Activated CD8-positive, alpha-beta T cell treated with anti-CD3 and anti-CD28 coated beads, Interleukin-2, amount 10 ng/mL, durations not matched to agents 7 days and 5 days (primary cell): ENCODE measurements at regions of chr14 and their contacts with region 1.

Region 1: DNA sequence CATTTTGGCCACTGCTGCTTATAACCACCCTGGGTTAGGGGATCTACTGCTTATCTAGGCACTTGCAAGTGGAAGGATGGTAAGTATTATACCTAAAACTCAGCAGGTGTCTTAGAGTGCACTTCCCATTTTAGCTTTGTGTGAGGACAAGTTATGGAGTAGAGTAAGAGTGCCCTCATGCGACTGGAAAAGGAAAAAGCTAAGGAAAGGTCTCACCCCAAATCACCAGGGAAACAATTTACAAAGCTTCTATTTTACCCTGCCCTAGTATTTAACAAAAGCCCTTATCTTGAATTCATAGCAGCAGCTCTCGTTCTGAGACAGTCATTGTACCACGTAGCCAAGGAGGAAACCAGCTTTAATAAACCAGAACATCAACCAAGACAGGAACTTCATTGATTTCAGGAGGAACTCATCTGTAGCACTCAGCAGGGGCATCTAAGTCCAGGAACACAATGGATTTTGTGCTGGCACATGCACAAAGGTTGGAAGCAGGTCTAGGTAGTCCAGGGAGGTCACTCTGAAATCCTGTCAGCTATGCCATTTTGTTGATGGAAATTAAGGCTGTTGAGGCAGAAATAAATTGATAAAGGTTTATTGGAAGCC is 2.9 kb downstream of the RDH12 start:
- DNase-seq: peak; percentile 53
- ATAC-seq: peak; percentile 82
- H3K4me3 Mint-ChIP-seq: no peak overlapping the region
- H3K27ac Mint-ChIP-seq: no peak overlapping the region
- H3K4me1 Mint-ChIP-seq: peaks cover 3% of the 10 kb centered on the region
- H3K27me3 Mint-ChIP-seq: peaks cover 5% of the 10 kb centered on the region

Region 2: DNA sequence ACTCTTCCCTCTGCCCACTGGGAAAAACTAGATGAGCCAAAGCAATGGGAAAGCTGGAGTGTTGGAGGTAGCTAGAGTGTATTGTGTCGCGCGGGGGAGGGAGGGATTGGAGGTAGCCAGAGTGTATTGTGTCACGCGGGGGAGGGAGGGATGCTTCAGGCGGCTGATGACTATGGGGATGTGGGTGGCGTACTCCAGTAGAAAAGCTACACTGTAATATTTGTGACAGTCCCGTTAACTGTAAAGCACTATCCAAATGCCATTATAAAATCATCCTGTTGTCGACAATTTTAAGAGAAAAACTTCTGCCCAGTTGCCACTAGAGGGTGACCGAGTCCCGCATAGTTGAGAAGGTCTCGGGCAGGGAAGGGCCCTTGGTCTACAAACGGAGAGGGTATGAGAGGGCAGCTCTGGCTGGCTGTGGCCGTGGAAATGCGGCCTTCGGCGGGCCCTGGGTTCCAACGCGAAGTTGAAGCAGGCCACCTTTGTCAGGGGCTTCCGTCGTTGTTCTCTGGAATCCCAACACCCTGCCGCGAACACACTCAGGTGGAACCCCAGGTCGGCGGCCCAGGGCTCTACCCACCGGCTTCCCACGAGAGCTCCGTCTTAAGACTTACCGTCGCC is 277.5 kb before region 1 on chr14:
- CTCF ChIA-PET with region 1: interaction called, 39 read pairs
- POLR2A ChIA-PET with region 1: no interaction called
- DNase-seq: peak; percentile 81
- ATAC-seq: peak; percentile 85
- H3K4me3 Mint-ChIP-seq: no peak overlapping the region
- H3K27ac Mint-ChIP-seq: no peak overlapping the region
- H3K4me1 Mint-ChIP-seq: peaks cover 7% of the 10 kb centered on the region
- H3K27me3 Mint-ChIP-seq: peaks cover 31% of the 10 kb centered on the region

Region 3: GRCh38 chr14:67571272-67571850 is 133.2 kb before region 1 on chr14:
- CTCF ChIA-PET with region 1: interaction called, 31 read pairs
- POLR2A ChIA-PET with region 1: no interaction called
- DNase-seq: peak; percentile 81
- ATAC-seq: peak; percentile 92
- H3K4me3 Mint-ChIP-seq: no peak overlapping the region
- H3K27ac Mint-ChIP-seq: no peak overlapping the region
- H3K4me1 Mint-ChIP-seq: peaks cover 8% of the 10 kb centered on the region
- H3K27me3 Mint-ChIP-seq: peaks cover 3% of the 10 kb centered on the region

Region 4: GRCh38 chr14:67599698-67600561 is 104.7 kb before region 1 on chr14 and contains the start of gene PIGH:
- CTCF ChIA-PET with region 1: interaction called, 24 read pairs
- POLR2A ChIA-PET with region 1: no interaction called
- DNase-seq: peak; percentile 95
- ATAC-seq: peak; percentile 99
- H3K4me3 Mint-ChIP-seq: peak within 1 kb of the TSS; percentile 82
- H3K27ac Mint-ChIP-seq: peak within 1 kb of the TSS; percentile 95
- H3K4me1 Mint-ChIP-seq: peaks cover 28% of the 10 kb centered on the region
- H3K27me3 Mint-ChIP-seq: no peaks in the 10 kb centered on the region
- total RNA-seq, gene PIGH: 14.8 to 17.5 TPM

Region 5: DNA sequence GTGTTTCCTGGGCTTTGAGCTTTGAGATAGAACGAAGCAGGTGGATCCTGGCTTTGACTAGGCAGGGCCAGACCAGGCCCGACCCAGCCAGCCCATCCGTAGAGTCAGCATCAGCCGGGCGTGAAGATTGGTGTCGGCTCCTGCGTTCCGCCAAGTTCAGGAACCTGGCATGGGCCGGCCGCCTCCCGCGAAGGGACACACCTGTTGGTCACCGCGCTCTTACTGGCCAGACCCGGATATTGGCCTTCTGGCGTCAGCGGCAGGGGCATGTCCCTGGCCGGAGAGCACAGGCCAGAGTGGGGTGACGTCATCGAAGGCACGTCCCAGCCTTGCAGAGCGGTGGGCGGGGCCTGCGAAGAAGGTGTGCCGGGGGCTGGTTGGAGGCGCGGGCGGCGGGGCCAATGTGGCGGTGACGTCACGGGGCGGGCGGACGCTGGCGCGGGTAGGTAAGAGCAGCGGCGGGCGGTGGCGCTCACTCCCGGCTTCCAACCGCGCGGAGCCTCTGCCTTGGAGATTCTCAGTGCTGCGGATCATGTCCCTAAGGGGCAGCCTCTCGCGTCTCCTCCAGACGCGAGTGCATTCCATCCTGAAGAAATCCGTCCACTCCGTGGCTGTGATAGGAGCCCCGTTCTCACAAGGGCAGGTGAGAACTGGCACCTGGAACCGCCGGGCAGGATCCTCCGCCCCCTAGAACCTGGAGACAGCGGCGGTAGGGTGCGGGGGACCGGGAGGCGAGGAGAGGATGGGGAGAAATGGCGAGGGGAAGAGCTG is 85.0 kb before region 1 on chr14 and contains the start of gene ARG2:
- CTCF ChIA-PET with region 1: interaction called, 93 read pairs
- POLR2A ChIA-PET with region 1: interaction called, 3 read pairs
- DNase-seq: peak; percentile 98
- ATAC-seq: peak; percentile 85
- H3K4me3 Mint-ChIP-seq: peak within 1 kb of the TSS; percentile 80
- H3K27ac Mint-ChIP-seq: peak within 1 kb of the TSS; percentile 83
- H3K4me1 Mint-ChIP-seq: peaks cover 34% of the 10 kb centered on the region
- H3K27me3 Mint-ChIP-seq: peaks cover 18% of the 10 kb centered on the region
- total RNA-seq, gene ARG2: 1.6 to 2.3 TPM

Region 6: DNA sequence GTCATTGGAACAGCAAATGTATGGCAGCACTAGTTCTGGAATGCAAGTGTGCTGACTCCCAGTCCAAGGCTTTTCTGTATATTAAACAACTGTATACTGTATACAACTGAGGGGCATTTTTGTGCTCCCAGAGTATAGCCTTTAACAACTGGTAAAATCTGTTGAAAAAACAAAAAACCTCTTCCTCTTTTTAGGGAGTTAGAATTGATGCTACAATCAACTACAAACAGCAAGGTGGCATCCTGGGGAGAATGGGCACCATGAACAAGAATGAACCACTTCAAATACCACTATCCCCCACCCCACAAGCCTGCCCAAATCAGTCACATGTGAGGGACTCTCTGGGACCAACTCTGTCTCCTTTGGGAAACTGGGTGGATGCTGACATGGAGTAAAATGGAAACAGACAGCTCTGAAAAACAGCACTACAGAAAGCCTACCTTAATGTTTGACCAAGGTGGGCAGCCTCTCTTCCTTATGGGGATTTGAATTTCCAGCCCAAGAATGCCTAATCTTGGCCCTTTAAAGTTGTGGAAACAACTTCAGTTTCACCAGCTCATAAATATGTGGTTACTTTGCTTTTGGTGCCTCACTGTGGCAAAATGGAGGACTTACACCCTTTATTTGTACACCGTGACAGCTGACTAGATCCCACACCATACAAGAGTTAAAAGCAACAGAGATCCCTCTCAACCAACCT is 37.7 kb before region 1 on chr14:
- CTCF ChIA-PET with region 1: interaction called, 56 read pairs
- POLR2A ChIA-PET with region 1: no interaction called
- DNase-seq: peak; percentile 55
- ATAC-seq: peak; percentile 85
- H3K4me3 Mint-ChIP-seq: no peak overlapping the region
- H3K27ac Mint-ChIP-seq: peak overlapping the region; percentile 28
- H3K4me1 Mint-ChIP-seq: peaks cover 33% of the 10 kb centered on the region
- H3K27me3 Mint-ChIP-seq: no peaks in the 10 kb centered on the region

Region 7: DNA sequence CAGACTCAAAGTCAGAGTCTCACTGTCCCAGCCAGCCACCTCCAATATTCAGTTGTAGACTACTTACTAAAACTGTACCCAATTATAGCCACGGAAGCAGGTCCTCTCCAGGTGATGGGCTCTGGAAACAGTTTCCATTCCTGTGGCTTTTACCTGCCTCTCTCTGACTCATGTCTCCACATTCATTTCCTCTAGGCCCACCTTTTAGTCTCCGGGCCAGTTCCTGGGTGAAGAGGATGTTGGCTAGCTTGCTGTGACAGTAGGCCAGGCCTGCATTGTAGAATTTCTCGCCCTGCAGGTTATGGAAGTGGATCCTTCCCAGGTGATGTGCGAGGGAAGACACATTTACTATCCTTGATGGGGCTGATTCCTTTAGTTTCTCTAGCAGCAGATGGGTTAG is 14.6 kb before region 1 on chr14:
- CTCF ChIA-PET with region 1: interaction called, 33 read pairs
- POLR2A ChIA-PET with region 1: interaction called, 3 read pairs
- DNase-seq: no peak
- ATAC-seq: no peak
- H3K4me3 Mint-ChIP-seq: no peak overlapping the region
- H3K27ac Mint-ChIP-seq: no peak overlapping the region
- H3K4me1 Mint-ChIP-seq: peaks cover 23% of the 10 kb centered on the region
- H3K27me3 Mint-ChIP-seq: no peaks in the 10 kb centered on the region